OCI-LY7 (cell line): ENCODE measurements at regions of chr9 and their contacts with region 1.

Region 1: DNA sequence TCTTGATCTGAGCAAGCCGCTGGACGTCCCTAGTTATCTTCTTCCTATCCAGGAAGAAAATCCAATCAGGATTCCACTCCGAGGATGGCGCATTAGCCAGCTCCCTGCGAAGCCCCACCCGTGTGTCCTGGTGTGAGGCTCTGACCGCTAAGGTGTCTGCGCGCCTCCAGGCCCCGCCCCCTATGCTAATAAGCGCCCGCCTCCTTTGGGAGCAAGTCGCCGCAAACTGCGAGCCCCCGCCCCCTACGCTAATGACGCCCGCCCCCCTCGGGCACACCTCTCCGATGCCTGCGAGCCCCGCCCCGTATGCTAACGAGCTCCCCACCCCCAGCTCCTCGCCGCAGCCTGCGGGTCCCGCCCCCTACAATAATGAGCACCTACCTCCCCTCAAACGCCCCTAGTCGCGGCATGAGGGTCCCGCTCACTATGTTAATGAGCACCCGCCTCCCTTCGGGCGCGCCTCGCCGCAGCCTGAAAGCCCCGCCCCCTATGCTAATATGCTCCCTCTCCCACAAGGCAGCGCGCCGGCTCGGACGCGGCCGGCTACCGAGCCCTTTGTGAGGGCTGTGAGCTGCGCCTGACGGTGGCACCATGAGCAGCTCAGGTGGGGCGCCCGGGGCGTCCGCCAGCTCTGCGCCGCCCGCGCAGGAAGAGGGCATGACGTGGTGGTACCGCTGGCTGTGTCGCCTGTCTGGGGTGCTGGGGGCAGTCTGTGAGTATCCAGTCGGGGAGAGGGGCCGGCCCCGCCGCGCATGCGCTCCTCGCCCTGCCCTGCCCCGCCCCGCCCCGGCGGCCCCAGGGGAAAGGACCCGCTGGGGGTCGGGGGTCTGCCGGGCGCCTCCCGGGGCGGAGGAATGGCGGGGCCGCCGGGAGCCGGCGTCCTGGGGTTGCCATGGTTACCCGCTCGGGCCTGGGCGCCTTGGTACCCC is at the start of gene CACFD1:
- DNase-seq: peak; percentile 96
- H3K4me3 ChIP-seq: peak within 1 kb of the TSS; percentile 74
- H3K27ac ChIP-seq: peak within 1 kb of the TSS; percentile 77
- H3K4me1 ChIP-seq: peaks cover 51% of the 10 kb centered on the region
- CTCF ChIP-seq: no peak
- total RNA-seq, gene CACFD1: 14.9 and 17.2 TPM in 2 replicates

Region 2: DNA sequence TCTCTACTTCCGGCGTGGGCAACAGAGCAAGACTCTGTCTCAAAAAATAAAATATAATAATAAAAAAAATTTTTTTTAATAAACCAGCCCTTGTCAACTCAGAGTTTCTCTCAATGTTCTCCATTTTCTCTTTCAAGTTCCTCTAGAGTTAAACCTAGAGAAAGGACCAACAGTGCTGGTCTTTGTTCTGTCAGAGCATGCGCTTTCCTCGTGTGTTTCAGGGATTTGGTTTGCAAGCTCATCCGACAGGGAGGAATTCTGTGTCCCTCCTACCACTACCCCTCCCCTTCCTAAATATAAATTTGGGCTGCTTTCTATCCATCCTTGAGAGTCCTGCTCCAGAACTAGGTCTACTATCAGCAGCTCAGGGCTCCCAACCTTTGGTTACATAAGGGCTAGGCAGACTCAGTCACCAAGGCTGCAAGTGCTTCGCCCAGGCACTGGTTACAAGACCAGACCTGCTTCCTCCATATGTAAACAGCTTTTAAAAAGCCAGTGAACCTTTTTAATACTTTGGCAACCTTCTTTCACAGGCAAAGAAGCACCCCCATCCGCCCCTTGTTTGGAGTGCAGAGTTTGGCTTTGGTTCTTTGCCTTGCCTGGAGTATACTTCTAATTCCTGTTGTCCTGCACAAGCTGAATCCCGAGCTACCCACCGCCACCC is 1118.4 kb before region 1 on chr9:
- CTCF ChIA-PET with region 1: no interaction called
- POLR2A ChIA-PET with region 1: no interaction called
- intact Hi-C with region 1: no loop called
- DNase-seq: no peak
- H3K4me3 ChIP-seq: no peak overlapping the region
- H3K27ac ChIP-seq: no peak overlapping the region
- H3K4me1 ChIP-seq: no peaks in the 10 kb centered on the region
- CTCF ChIP-seq: no peak

Region 3: GRCh38 chr9:133356391-133357091 is 103.2 kb before region 1 on chr9 and contains the starts of genes SURF1 and SURF2:
- CTCF ChIA-PET with region 1: no interaction called
- POLR2A ChIA-PET with region 1: interaction called, 6 read pairs
- intact Hi-C with region 1: loop called (anchors 5 kb)
- DNase-seq: peak; percentile 92
- H3K4me3 ChIP-seq: peak within 1 kb of the TSS; percentile 78
- H3K27ac ChIP-seq: peak within 1 kb of the TSS; percentile 52
- H3K4me1 ChIP-seq: peaks cover 35% of the 10 kb centered on the region
- CTCF ChIP-seq: peak; percentile 41
- total RNA-seq, gene SURF1: 22.9 and 34.6 TPM in 2 replicates
- total RNA-seq, gene SURF2: 19.0 and 32.5 TPM in 2 replicates

Region 4: DNA sequence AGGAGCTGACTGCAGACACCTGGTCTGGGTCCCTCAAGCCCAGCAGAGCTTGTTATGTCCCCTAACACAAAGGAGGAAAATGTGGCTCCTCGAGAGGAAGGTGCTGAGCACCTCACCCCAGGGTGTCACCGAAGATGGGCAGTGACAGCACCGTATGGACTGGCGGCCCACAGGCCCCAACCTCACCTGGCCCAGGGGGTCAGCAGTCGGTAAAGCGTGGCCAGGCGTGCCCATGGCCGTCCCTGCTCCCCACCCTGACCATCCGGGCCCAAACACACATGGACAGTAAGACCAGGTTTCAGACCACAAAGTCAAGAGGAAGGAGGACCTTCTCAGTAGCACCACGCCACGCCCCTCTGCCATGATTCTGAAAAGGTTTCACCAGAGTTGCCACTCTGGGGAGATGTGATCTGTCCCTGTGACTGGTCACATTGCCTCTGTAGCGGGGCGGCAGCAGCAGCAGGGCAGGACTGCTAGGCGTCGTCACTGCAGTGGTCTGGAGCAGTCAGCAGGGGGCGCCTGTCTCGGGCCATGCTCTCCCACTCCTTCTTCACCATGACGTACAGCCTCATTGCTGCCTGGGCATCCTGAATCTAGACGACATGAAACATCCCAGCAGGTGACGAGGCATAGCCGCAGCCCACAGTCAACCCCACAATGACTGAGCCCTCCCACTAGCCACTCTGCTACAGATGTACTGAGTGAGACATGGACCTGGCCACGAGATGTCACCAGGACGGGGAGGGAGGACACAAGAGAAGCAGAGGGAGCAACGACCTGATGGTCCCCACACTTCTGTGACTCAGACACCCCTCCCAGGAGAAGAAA is 53.0 kb before region 1 on chr9:
- CTCF ChIA-PET with region 1: interaction called, 5 read pairs
- POLR2A ChIA-PET with region 1: no interaction called
- intact Hi-C with region 1: loop called (anchors 1 kb)
- DNase-seq: peak; percentile 79
- H3K4me3 ChIP-seq: no peak overlapping the region
- H3K27ac ChIP-seq: peak overlapping the region; percentile 8
- H3K4me1 ChIP-seq: peaks cover 17% of the 10 kb centered on the region
- CTCF ChIP-seq: peak; percentile 94

Region 5: GRCh38 chr9:133417541-133418461 is 41.9 kb before region 1 on chr9 and contains the start of gene REXO4:
- CTCF ChIA-PET with region 1: interaction called, 3 read pairs
- POLR2A ChIA-PET with region 1: interaction called, 5 read pairs
- intact Hi-C with region 1: loop called (anchors 2 kb)
- DNase-seq: peak; percentile 95
- H3K4me3 ChIP-seq: peak within 1 kb of the TSS; percentile 88
- H3K27ac ChIP-seq: peak within 1 kb of the TSS; percentile 65
- H3K4me1 ChIP-seq: peaks cover 50% of the 10 kb centered on the region
- CTCF ChIP-seq: no peak
- total RNA-seq, gene REXO4: 33.6 and 35.7 TPM in 2 replicates